Ascending aorta (tissue), 2 donors: ENCODE measurements at regions of chr2 and their contacts with region 1.

Region 1: GRCh38 chr2:64144057-64145013 is at the start of gene PELI1:
- DNase-seq: peak; percentile 91 to 97
- H3K4me3 ChIP-seq: peak within 1 kb of the TSS; percentile 94 to 98
- H3K27ac ChIP-seq: peak within 1 kb of the TSS; percentile 97 to 99
- H3K4me1 ChIP-seq: peaks cover 0 to 10% of the 10 kb centered on the region in 2 donors
- H3K27me3 ChIP-seq: no peaks in the 10 kb centered on the region
- CTCF ChIP-seq: peak; percentile 26 to 44 (median 31)
- total RNA-seq, gene PELI1: 140 TPM

Region 2: GRCh38 chr2:63588385-63589147 is 555.8 kb before region 1 on chr2 and contains the starts of genes MDH1 and WDPCP:
- intact Hi-C with region 1: loop called (anchors 2 kb)
- DNase-seq: peak; percentile 90 to 97
- H3K4me3 ChIP-seq: peak within 1 kb of the TSS; percentile 66 to 83
- H3K27ac ChIP-seq: peak within 1 kb of the TSS; percentile 88
- H3K4me1 ChIP-seq: peaks cover 5 to 16% of the 10 kb centered on the region in 2 donors
- H3K27me3 ChIP-seq: no peaks in the 10 kb centered on the region
- CTCF ChIP-seq: no peak
- total RNA-seq, gene MDH1: 65.7 TPM
- total RNA-seq, gene WDPCP: 5.2 TPM

Region 3: GRCh38 chr2:64018923-64019718 is 125.2 kb before region 1 on chr2 and contains the start of gene VPS54:
- intact Hi-C with region 1: loop called (anchors 2 kb)
- DNase-seq: peak; percentile 16 to 80
- H3K4me3 ChIP-seq: peak within 1 kb of the TSS; percentile 83 to 97
- H3K27ac ChIP-seq: peak within 1 kb of the TSS; percentile 95 to 100
- H3K4me1 ChIP-seq: peaks cover 5 to 19% of the 10 kb centered on the region in 2 donors
- H3K27me3 ChIP-seq: no peaks in the 10 kb centered on the region
- CTCF ChIP-seq: peak in 2 of 3 experiments; percentile 15 to 32
- total RNA-seq, gene VPS54: 4.6 TPM

Region 4: DNA sequence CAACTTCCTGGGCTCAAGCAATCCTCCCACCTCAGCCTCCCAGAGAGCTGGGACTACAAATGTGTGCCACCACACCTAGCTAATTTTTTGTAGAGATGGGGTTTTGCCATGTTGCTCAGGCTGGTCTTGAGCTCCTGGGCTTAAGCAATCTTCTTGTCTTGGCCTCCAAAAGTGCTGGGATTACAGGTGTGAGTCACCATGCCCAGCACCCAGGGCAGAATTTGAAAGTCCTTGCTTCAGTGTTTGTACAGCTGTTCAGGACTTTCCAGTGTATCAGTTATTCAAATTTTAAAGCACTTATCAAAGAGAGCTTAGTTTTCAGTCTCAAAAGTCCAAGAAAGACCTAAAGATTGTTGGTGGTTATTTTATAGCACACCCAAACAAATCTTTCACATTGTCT is 81.5 kb before region 1 on chr2:
- intact Hi-C with region 1: loop called (anchors 5 kb)
- DNase-seq: no peak
- H3K4me3 ChIP-seq: no peak overlapping the region
- H3K27ac ChIP-seq: no peak overlapping the region
- H3K4me1 ChIP-seq: peaks cover 0 to 8% of the 10 kb centered on the region in 2 donors
- H3K27me3 ChIP-seq: no peaks in the 10 kb centered on the region
- CTCF ChIP-seq: no peak

Region 5: DNA sequence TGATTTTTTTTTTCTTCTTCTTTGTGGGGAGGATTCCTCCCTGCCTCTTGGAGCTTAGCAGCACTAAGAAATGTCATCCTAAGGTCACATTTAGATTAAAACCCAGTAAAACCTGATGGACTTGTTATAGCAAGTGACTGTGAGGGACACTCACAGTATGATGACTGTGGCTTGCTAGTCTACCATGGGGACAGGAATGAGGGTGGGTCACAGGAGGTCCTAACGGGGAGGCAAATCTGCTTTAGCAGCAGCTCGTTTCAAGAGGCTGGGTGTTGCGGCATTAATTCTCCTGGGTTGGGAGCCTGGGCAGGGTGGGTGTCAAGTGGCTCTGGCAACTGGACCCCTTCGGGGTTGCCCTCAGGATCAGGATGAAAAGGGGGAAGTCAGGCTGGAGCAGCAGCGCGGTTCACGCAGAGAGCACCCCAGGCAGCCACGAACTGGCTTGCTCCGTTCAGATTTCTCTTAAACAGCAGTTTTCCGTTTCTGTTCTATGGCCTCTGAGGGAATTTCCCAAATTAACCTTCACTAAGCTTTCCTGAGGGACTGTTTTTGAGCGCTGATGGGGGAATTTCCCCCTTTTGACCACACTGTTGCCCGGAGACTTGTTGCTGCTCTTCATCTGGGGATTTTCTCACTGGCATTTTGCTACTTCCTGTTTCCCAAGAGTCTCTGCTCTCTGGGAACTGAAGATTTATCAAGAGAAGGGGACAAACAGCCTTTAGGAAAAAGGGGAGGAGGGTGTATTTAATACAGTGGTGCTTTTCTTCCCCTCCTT is 59.7 kb after region 1 on chr2:
- intact Hi-C with region 1: loop called (anchors 5 kb)
- DNase-seq: no peak
- H3K4me3 ChIP-seq: peak overlapping the region; percentile 11 to 39
- H3K27ac ChIP-seq: peak overlapping the region; percentile 78 to 81
- H3K4me1 ChIP-seq: peaks cover 5 to 19% of the 10 kb centered on the region in 2 donors
- H3K27me3 ChIP-seq: no peaks in the 10 kb centered on the region
- CTCF ChIP-seq: no peak

Region 6: GRCh38 chr2:64311948-64312621 is 167.8 kb after region 1 on chr2:
- intact Hi-C with region 1: loop called (anchors 5 kb)
- DNase-seq: peak in 1 of 2 donors; percentile 90
- H3K4me3 ChIP-seq: peak overlapping the region in 1 of 2 donors; percentile 54
- H3K27ac ChIP-seq: peak overlapping the region; percentile 42 to 74
- H3K4me1 ChIP-seq: peaks cover 4 to 7% of the 10 kb centered on the region in 2 donors
- H3K27me3 ChIP-seq: no peaks in the 10 kb centered on the region
- CTCF ChIP-seq: peak; percentile 37 to 61 (median 42)

Region 7: GRCh38 chr2:64523666-64524603 is 379.6 kb after region 1 on chr2 and contains the start of gene AFTPH:
- intact Hi-C with region 1: loop called (anchors 2 kb)
- DNase-seq: peak; percentile 98 to 99
- H3K4me3 ChIP-seq: peak within 1 kb of the TSS; percentile 64 to 99
- H3K27ac ChIP-seq: peak within 1 kb of the TSS; percentile 93 to 98
- H3K4me1 ChIP-seq: peaks cover 0 to 2% of the 10 kb centered on the region in 2 donors
- H3K27me3 ChIP-seq: no peaks in the 10 kb centered on the region
- CTCF ChIP-seq: no peak
- total RNA-seq, gene AFTPH: 58.0 TPM